ENCODE measurements at regions of chr1 and their contacts with region 1.

Region 1: GRCh38 chr1:46303038-46303871 is at the starts of genes LRRC41 and UQCRH:
- DNase-seq: peak; percentile 90 to 96 (median 93)
- H3K4me3 ChIP-seq: peak within 1 kb of the TSS; percentile 88
- H3K27ac ChIP-seq: peak within 1 kb of the TSS; percentile 94 to 97
- H3K4me1 ChIP-seq: peaks cover 13% of the 10 kb centered on the region
- H3K27me3 ChIP-seq: no peaks in the 10 kb centered on the region
- CTCF ChIP-seq: peak in 1 of 3 donors; percentile 11
- EP300 ChIP-seq: no peak
- POLR2A ChIP-seq: peak; percentile 67
- total RNA-seq, gene LRRC41: 54.8 to 99.8 (median 74.1) TPM
- total RNA-seq, gene UQCRH: 140 to 453 (median 189) TPM

Region 2: GRCh38 chr1:46340404-46341221 is 37.4 kb after region 1 on chr1 and contains the start of gene NSUN4:
- intact Hi-C with region 1: loop called in 2 of 4 experiments (anchors 1 to 5 kb)
- DNase-seq: peak; percentile 90 to 94 (median 92)
- H3K4me3 ChIP-seq: peak within 1 kb of the TSS; percentile 63
- H3K27ac ChIP-seq: peak within 1 kb of the TSS; percentile 91 to 95
- H3K4me1 ChIP-seq: peaks cover 3% of the 10 kb centered on the region
- H3K27me3 ChIP-seq: no peaks in the 10 kb centered on the region
- CTCF ChIP-seq: peak; percentile 39 to 90 (median 82)
- EP300 ChIP-seq: peak; percentile 87
- POLR2A ChIP-seq: peak; percentile 87
- total RNA-seq, gene NSUN4: 15.9 to 35.2 (median 19.1) TPM

Region 3: GRCh38 chr1:46394108-46394871 is 91.0 kb after region 1 on chr1 and contains the start of gene FAAH:
- intact Hi-C with region 1: no loop called
- DNase-seq: peak; percentile 48 to 71 (median 64)
- H3K4me3 ChIP-seq: peak within 1 kb of the TSS; percentile 37
- H3K27ac ChIP-seq: no peak within 1 kb of the TSS
- H3K4me1 ChIP-seq: no peaks in the 10 kb centered on the region
- H3K27me3 ChIP-seq: no peaks in the 10 kb centered on the region
- CTCF ChIP-seq: no peak
- EP300 ChIP-seq: no peak
- POLR2A ChIP-seq: no peak
- total RNA-seq, gene FAAH: 7.5 to 32.7 (median 9.3) TPM

Region 4: DNA sequence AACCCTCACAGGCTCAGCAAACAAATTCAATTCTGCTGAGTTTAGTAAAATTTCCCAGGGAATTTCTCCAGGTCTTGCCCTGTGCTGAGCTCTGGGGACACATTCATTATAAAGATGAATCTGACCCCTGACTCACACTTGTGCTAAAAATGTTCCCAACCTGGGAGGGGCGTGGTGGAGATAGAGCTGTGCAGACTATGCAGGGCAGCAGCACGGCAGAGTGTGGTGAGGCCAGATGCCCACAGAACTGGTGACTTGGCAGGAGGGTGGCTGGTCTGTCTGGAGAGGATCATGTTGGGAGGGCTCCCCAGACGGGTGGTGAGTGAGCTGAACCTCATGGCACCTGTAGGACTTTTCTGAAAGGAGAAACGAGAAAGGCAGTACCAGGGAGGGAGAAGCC is 122.5 kb after region 1 on chr1:
- intact Hi-C with region 1: no loop called
- DNase-seq: no peak
- H3K4me3 ChIP-seq: no peak overlapping the region
- H3K27ac ChIP-seq: no peak overlapping the region
- H3K4me1 ChIP-seq: no peaks in the 10 kb centered on the region
- H3K27me3 ChIP-seq: no peaks in the 10 kb centered on the region
- CTCF ChIP-seq: no peak
- EP300 ChIP-seq: no peak
- POLR2A ChIP-seq: no peak

Region 5: DNA sequence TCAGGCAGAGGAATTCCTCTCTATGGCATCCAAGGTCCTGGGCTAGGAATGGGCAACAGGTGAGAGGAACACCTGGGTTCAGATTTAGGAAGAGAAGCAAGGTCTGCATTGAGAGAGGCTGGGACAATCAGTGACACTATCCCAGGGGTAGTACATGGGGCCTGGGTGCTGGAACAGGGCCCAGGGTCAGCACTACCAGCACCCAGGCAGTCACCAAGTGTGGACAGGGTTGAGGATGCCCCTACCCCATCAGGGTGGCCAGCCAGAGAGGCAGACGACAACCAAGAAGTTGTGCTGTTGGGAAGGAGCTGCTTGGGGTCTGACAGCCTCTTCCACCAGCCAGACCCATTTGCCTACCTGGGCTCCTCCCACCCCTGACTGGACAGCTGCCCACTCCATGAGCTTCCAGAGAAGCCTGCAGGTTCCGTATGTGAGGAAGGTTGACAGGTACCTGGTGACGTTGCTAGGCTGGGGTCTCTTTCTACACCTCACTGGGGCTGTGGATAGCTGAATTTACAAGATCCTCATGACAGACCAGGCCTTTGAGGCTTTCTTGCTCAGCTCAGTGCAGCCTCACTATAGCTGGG is 624.1 kb after region 1 on chr1:
- intact Hi-C with region 1: no loop called
- DNase-seq: no peak
- H3K4me3 ChIP-seq: no peak overlapping the region
- H3K27ac ChIP-seq: no peak overlapping the region
- H3K4me1 ChIP-seq: no peaks in the 10 kb centered on the region
- H3K27me3 ChIP-seq: no peaks in the 10 kb centered on the region
- CTCF ChIP-seq: no peak
- EP300 ChIP-seq: no peak
- POLR2A ChIP-seq: no peak

Measured in ovary (tissue), 10 donors.